HepG2 (cell line): ENCODE measurements at regions of chr3 and their contacts with region 1.

Region 1: GRCh38 chr3:126475413-126476114 is at the start of gene ZXDC:
- DNase-seq: peak; percentile 82
- ATAC-seq: peak; percentile 70
- H3K4me3 ChIP-seq: peak within 1 kb of the TSS; percentile 78 to 95 (median 80)
- H3K27ac ChIP-seq: peak within 1 kb of the TSS; percentile 90
- H3K4me1 ChIP-seq: peaks cover 71% of the 10 kb centered on the region
- H3K27me3 ChIP-seq: no peaks in the 10 kb centered on the region; a peak in 1 of 5 replicates
- CTCF ChIP-seq: peak; percentile 61
- EP300 ChIP-seq: no peak
- POLR2A ChIP-seq: peak in 1 of 2 experiments; percentile 58; a peak in 2 of 4 replicates
- RAD21 ChIP-seq: peak; percentile 67
- total RNA-seq, gene ZXDC: 14.7 and 21.2 TPM in 2 replicates

Region 2: DNA sequence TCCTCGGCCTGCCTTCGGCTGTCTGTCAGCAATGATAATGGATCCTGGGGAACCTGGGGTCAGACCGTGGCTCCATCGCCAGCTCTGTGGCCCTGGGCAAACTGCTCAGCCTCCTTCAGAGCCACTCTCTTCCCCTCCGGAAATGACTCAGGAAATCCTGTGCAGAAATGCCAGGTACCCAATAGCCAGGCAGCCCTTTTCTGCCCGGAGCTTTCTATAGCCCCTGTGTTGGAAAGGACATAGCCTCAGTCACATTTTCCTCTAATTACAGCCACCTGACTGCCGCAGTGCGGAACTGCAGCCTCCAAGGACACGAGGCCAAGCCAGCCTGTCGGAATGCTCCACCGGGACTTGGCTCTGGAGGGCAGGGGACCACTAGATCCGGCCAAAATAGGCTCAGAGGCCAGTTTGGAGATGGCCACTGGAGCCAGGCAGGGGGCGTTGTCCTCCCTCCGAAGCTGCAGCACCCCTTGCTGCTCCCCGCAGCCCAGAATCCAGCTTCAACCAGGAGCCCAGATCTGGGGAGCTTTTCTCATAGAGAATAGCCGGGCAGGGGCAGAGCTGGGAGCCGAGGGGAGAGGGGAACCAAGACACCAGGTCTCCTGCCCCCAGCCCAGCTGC is 11.7 kb after region 1 on chr3:
- CTCF ChIA-PET with region 1: no interaction called
- POLR2A ChIA-PET with region 1: interaction called, 12 read pairs
- in situ Hi-C with region 1: no loop called
- intact Hi-C with region 1: loop called (anchors 1 kb)
- DNase-seq: peak; percentile 58
- ATAC-seq: peak; percentile 78
- H3K4me3 ChIP-seq: peak overlapping the region in 1 of 3 experiments; percentile 39; a peak in 1 of 6 replicates
- H3K27ac ChIP-seq: no peak overlapping the region
- H3K4me1 ChIP-seq: peaks cover 69% of the 10 kb centered on the region
- H3K27me3 ChIP-seq: no peaks in the 10 kb centered on the region; a peak in 1 of 5 replicates
- CTCF ChIP-seq: peak; percentile 60
- EP300 ChIP-seq: no peak
- POLR2A ChIP-seq: no peak
- RAD21 ChIP-seq: no peak

Region 3: DNA sequence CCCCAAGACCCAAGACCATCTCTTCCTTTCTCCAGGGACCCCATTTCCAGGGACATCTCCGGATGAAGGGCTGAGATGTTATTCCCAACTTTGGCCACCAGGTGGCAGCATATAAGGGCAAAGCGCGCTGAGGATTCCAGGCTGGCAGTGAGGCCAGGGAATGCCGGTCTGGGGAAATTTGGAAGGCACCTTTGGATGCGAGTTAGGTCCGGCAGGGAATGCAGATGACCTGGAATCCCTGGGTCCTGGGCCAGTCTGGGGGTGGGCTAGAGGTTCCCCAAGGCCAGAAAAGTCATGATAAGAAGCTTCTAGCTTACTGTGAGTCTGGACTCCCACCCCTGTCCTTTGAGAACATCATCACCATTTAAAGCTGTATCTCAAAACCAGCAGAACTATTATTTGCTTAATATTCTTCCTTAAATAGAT is 46.8 kb after region 1 on chr3:
- CTCF ChIA-PET with region 1: no interaction called
- POLR2A ChIA-PET with region 1: interaction called, 39 read pairs
- in situ Hi-C with region 1: no loop called
- intact Hi-C with region 1: loop called (anchors 5 kb)
- DNase-seq: peak; percentile 60
- ATAC-seq: no peak
- H3K4me3 ChIP-seq: peak overlapping the region; percentile 35 to 70 (median 65); a peak in 4 of 6 replicates
- H3K27ac ChIP-seq: peak overlapping the region; percentile 98
- H3K4me1 ChIP-seq: peaks cover 91% of the 10 kb centered on the region
- H3K27me3 ChIP-seq: no peaks in the 10 kb centered on the region; a peak in 1 of 5 replicates
- CTCF ChIP-seq: peak; percentile 93
- EP300 ChIP-seq: no peak
- POLR2A ChIP-seq: no peak
- RAD21 ChIP-seq: peak; percentile 80

Region 4: DNA sequence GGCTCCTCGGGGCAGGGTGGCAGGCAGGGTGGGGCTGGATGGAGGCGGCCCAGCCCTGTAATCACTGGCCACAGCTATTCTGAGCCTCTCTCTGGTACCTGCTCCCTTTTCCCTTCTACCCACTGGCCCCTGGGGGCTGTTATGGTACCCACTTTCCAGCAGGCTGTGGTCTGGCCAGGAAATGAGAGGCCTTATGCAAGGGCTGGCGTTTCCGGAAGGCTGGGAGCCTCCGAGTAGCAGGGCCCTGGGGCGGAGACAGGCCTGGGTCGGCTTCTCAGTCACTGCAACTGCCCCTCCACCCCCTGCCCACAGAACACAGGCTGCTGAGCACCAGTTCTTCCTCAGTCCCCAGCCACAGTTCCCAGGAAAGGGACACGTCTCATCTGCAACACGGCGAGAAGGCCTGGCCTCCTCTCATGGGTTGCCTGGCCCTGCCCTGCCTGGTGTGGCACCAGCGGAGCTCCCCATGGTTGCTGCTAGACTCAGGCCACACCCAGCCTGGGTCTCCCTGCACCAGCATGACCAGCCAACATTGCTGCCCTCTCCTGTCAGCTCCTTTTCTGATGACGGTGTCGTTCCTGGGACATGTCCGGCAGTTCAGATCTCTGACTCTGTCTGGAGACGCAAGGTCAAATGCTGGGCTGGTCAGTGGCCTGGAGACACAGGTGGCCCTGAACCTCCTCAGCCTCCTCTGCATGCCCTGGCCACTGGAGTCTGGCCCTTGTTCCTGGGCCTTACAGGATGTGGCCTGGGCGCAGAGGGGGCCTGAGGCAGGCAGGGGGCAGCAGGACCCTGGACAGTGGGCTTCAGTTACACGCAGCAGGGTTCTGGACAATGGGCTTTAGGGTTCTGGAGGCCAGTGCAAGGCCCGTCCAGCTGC is 54.8 kb after region 1 on chr3:
- CTCF ChIA-PET with region 1: no interaction called
- POLR2A ChIA-PET with region 1: interaction called, 16 read pairs
- in situ Hi-C with region 1: no loop called
- intact Hi-C with region 1: no loop called
- DNase-seq: no peak
- ATAC-seq: no peak
- H3K4me3 ChIP-seq: no peak overlapping the region
- H3K27ac ChIP-seq: peak overlapping the region; percentile 88
- H3K4me1 ChIP-seq: peaks cover 58% of the 10 kb centered on the region
- H3K27me3 ChIP-seq: no peaks in the 10 kb centered on the region
- CTCF ChIP-seq: peak; percentile 41
- EP300 ChIP-seq: no peak
- POLR2A ChIP-seq: no peak
- RAD21 ChIP-seq: no peak